Right ventricle myocardium inferior (tissue), 1 donor: ENCODE measurements at regions of chr19 and their contacts with region 1.

Region 1: DNA sequence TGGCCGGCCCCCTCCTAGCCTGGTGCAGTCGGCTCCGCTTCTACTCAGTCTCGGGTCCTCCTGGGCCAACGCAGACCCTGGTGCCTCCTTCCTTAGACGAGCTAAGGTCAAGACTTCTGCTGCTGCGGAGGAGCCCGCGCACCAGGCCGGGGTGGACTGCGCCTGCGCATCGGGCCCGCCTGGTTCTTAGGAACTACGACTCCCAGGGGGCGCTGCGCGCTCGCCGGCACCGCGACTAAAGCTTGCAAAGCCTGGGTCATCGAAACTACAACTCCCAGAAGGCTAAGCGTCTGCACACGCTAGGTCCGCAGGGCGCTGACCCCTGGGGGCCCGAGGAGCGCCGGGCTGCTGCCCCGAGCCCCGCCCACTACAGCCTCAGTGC is at the start of gene ZNF835:
- DNase-seq: peak; percentile 97
- ATAC-seq: peak; percentile 95
- total RNA-seq, gene ZNF835: 7.3 TPM

Region 2: GRCh38 chr19:56594783-56595547 is 76.6 kb before region 1 on chr19 and contains the start of gene ZNF71:
- intact Hi-C with region 1: loop called (anchors 5 kb)
- DNase-seq: peak; percentile 96
- ATAC-seq: peak; percentile 99
- total RNA-seq, gene ZNF71: 6.4 TPM

Region 3: GRCh38 chr19:56654152-56654551 is 17.5 kb before region 1 on chr19:
- intact Hi-C with region 1: no loop called
- DNase-seq: no peak
- ATAC-seq: no peak

Region 4: GRCh38 chr19:56838909-56839651 is 167.5 kb after region 1 on chr19:
- intact Hi-C with region 1: loop called (anchors 2 kb)
- DNase-seq: peak; percentile 96
- ATAC-seq: peak; percentile 71